ENCODE measurements at regions of chr17 and their contacts with region 1.

Region 1: DNA sequence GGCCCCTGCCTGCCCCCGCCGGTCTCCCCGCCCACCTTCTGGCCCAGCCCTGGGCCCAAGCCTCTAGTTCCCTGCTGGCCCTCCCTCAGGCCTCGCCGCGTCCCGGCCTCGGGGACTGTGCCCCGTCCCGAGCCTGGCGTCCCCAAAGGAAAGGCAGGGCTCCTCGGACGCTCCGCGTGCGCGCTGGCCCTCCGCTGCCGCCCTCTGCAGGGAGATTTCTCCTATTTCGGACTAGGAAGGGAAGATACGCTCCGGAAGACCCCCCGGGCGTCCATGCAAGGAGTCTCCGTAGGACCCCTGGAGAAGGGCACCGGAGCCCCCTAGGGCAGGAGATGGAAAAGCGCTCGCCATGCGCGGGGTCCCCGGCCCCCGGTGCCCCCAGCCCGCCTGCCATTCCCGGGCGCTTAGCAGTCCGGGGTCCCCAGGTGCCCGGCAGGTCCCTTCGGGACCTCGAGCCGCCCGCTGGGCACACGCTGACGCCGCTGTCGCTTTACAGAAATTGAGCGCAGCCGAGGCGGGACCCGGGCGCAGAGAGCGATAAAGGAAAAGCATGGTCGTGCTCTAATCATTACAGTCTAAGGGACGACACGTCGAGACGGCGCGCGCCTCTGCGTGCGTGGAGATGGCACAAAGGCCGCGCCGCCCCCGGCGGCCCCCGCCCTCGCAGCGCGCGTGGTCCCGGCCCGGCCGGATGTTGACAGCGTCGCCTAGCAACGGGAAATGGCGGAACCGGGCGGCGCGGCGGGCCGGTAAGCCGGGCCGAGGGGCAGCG is at the start of gene CCDC40:
- DNase-seq: peak; percentile 93
- H3K4me3 ChIP-seq: peak within 1 kb of the TSS; percentile 66 to 87 (median 83)
- H3K27ac ChIP-seq: peak within 1 kb of the TSS; percentile 83 to 96 (median 94)
- H3K4me1 ChIP-seq: peaks cover 0 to 24% (median 10%) of the 10 kb centered on the region in 4 donors
- H3K27me3 ChIP-seq: no peaks in the 10 kb centered on the region
- CTCF ChIP-seq: no peak
- EP300 ChIP-seq: no peak
- POLR2A ChIP-seq: peak; percentile 8 to 31
- total RNA-seq, gene CCDC40: 5.3 to 25.8 (median 6.4) TPM

Region 2: GRCh38 chr17:80008383-80008840 is 27.7 kb before region 1 on chr17:
- intact Hi-C with region 1: loop called (anchors 2 kb)
- DNase-seq: peak; percentile 90
- H3K4me3 ChIP-seq: no peak overlapping the region
- H3K27ac ChIP-seq: no peak overlapping the region
- H3K4me1 ChIP-seq: peaks cover 0 to 17% (median 12%) of the 10 kb centered on the region in 4 donors
- H3K27me3 ChIP-seq: no peaks in the 10 kb centered on the region
- CTCF ChIP-seq: peak; percentile 84 to 93 (median 90)
- EP300 ChIP-seq: no peak
- POLR2A ChIP-seq: no peak

Region 3: DNA sequence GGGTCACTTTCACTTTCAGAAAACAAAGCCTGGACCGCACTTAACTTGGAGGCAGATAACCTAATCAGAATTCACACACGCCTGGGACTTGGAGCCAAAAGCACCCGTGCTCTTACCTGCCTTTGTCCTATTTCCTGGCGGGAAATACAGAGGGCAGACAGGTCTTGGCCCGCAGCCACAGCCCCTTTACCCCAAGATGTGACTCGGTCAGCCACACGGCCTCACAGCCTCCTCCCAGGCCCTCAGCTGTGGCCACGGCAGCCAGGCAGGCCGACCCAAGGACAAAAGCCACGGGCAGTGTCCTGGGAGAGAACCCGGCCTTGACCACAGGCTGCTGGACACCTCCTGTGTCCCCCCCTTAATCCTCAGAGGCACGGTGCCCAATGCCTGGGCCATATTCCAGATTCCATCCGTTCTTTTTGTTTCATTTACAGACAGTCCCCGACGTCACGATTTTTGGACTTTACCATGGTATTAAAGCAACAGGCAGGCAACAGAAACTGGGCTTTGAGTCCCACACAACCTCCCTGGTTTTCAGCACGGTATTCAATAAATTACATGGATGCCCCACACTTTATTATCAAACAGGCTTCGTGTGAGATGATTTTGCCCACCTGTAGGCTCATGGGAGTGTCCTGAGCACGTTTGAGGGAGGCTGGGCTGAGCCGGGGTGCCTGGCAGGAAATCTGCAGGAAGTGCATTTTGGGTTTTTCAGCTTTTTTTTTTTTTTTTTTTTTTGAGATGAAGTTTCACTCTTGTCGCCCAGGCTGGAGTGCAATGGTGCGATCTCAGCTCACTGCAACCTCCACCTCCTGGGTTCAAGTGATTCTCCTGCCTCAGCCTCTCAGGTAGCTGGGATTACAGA is 35.2 kb after region 1 on chr17:
- intact Hi-C with region 1: loop called (anchors 5 kb)
- DNase-seq: peak; percentile 87
- H3K4me3 ChIP-seq: peak overlapping the region; percentile 27 to 51 (median 44)
- H3K27ac ChIP-seq: peak overlapping the region; percentile 79 to 88 (median 85)
- H3K4me1 ChIP-seq: peaks cover 0 to 45% (median 42%) of the 10 kb centered on the region in 4 donors
- H3K27me3 ChIP-seq: no peaks in the 10 kb centered on the region
- CTCF ChIP-seq: no peak
- EP300 ChIP-seq: no peak
- POLR2A ChIP-seq: no peak

Region 4: GRCh38 chr17:80082403-80083135 is 46.4 kb after region 1 on chr17:
- intact Hi-C with region 1: loop called (anchors 1 kb)
- DNase-seq: peak; percentile 82
- H3K4me3 ChIP-seq: peak overlapping the region in 3 of 4 donors; percentile 1 to 23 (median 3)
- H3K27ac ChIP-seq: no peak overlapping the region
- H3K4me1 ChIP-seq: peaks cover 0 to 8% (median 4%) of the 10 kb centered on the region in 4 donors
- H3K27me3 ChIP-seq: no peaks in the 10 kb centered on the region
- CTCF ChIP-seq: peak; percentile 58 to 77 (median 68)
- EP300 ChIP-seq: no peak
- POLR2A ChIP-seq: no peak

Region 5: DNA sequence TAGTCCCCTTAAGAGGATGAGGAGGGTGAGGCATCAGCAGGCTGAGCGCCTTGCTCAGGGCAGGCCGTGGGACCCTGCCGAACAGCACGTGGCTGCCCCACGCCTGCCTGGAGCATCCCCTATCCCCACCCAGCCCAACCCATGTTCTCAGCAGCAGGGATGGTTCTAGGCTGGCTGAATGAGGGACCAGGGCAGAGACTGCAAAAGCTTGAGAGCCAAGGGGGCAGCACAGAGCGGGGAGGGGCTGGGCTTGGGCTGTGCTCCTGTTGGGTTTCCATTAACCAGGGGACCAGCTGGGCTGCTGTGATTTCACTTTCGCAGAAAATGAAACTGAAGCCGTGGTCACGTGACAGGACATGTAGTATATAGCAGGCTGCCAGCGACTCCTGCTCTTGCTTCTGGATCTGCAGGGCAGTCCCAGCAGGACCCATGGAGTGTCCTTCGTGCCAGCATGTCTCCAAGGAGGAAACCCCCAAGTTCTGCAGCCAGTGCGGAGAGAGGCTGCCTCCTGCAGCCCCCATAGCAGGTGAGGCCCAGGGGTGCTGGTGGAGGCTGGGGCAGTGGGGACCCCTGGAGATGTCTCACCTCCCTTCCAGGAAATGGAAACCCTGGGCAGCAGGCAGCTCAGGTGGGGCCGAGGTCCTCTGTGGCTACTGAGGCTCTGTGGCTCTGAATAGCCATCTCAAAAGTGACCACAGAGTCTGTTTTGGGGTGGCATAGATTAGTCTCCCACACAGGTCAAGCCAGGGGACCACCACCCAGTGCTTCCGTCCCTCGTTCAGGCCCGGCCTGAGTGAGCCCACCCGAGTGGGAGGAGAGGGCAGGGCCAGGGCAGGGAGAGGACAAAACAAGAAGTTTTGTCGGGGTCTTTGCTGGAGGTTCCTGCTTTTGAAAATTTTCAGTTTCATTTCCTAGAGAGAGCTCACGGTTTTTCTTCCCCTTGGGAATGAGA is 227.4 kb after region 1 on chr17:
- intact Hi-C with region 1: loop called (anchors 5 kb)
- DNase-seq: peak; percentile 95
- H3K4me3 ChIP-seq: peak overlapping the region; percentile 18 to 42 (median 39)
- H3K27ac ChIP-seq: peak overlapping the region; percentile 94 to 100 (median 99)
- H3K4me1 ChIP-seq: peaks cover 0 to 41% (median 39%) of the 10 kb centered on the region in 4 donors
- H3K27me3 ChIP-seq: no peaks in the 10 kb centered on the region
- CTCF ChIP-seq: no peak
- EP300 ChIP-seq: no peak
- POLR2A ChIP-seq: no peak

Measured in sigmoid colon (tissue), 7 donors.